ENCODE measurements at regions of chr19 and their contacts with region 1.

Region 1: GRCh38 chr19:15091901-15092753 is 10.1 kb downstream of the OR1I1 start:
- DNase-seq: peak in 1 of 3 donors; percentile 81
- ATAC-seq: peak; percentile 54
- H3K4me3 ChIP-seq: no peak overlapping the region
- H3K4me1 ChIP-seq: no peaks in the 10 kb centered on the region
- CTCF ChIP-seq: peak; percentile 47

Region 2: DNA sequence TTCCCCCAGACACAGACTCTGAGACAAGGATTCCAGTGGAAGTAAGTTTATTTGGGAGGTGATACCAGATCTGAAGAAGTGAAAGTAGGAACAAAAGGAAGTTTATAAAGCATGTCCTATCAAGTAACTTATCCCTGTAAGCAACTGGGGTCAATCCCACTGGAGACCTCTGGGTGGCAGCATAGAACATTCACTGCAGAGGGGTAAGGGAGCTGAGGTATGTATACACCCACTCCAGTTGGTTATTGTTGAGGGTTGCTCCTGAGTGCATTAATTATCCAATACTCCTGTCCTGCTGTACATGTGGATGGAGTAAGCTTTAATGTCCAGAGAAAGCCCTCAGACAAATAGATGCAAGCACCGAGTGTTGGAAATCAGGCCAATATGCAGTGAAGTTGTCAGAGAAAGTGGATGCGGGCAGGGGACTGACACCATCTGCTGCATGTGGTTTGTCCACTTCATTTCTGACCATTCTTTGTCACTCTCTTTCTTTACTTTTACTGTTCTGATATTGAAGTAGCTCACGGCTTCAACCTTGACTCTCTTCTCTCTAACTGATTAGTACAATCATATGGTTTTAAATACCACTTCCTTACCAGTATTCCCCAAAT is 62.0 kb after region 1 on chr19:
- intact Hi-C with region 1: loop called in 1 of 2 experiments (anchors 5 kb)
- DNase-seq: peak in 2 of 3 donors; percentile 39 to 41
- ATAC-seq: peak; percentile 65
- H3K4me3 ChIP-seq: no peak overlapping the region
- H3K4me1 ChIP-seq: no peaks in the 10 kb centered on the region
- CTCF ChIP-seq: no peak

Region 3: DNA sequence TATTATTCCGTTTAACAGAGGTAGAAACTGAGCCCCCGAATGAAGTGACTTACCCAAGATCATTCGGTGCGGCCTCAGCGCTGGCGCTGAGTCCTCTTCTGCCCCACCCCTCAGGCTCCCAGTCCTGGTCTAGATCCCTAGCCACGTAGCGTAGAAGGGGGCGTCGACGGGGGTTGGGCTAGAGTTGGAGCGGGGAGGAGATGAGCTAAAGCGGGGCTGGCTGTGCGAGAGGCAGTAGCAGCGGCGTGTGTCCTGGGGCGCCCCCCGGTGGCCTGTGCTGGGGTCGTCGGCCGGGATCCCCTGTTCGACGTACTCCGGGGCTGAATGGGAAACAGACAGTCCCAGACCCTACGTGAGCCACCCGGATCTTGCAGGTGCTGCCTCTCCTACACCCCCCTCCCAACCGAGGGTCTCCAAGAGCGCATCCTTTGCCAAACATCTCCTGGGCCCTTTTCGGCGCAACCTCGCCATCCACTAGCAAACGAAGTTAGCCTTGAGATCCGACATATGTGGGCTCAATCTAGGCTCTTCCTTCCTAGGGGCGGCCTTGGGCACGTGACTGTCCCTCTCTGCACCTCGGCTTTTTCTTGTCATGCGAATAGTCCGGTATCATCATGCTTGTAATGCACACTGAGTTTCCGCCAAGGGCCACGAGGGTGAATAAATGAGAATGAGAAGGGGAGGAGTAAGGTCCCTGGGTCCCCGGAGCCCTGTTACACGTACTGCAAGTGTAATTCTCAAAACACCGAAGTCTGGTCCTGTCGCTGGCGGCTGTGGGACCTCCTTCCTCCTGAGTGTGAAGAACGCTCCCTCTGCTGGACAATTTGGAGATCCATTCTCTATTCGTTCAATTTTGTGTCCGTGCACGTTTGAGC is 463.9 kb after region 1 on chr19:
- intact Hi-C with region 1: loop called in 1 of 2 experiments (anchors 10 kb)
- DNase-seq: peak; percentile 91 to 92 (median 91)
- ATAC-seq: peak; percentile 96
- H3K4me3 ChIP-seq: no peak overlapping the region
- H3K4me1 ChIP-seq: peaks cover 16% of the 10 kb centered on the region
- CTCF ChIP-seq: peak; percentile 46